ENCODE measurements at regions of chr2 and their contacts with region 1.

Region 1: DNA sequence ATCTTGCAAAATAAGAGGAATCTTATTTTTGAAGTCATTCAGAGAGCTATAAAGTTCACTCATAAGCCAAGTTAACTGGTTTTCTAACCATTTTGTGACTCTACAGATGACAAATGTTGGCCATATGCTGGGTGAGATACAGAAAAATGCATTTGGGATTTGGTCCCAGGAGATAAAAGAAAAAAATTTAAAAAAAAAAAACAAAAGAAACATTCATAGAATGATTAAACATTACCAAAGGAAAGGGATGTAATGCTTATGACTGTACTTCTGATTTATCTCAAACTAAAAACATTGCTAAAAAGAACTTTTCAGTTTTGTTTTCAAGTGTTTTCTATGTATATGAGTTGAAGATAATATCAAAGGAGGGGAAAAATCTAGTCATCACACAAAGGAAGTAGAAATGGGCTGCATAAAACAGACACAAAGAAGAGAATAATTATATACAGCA is 43.1 kb downstream of the PELI1 start:
- DNase-seq: peak in 3 of 14 experiments; percentile 21 to 63 (median 30)
- ATAC-seq: peak; percentile 49
- H3K4me3 ChIP-seq: no peak overlapping the region
- H3K4me3 Mint-ChIP-seq: peak overlapping the region; percentile 35
- H3K27ac ChIP-seq: peak overlapping the region in 1 of 2 donors; percentile 56
- H3K27ac Mint-ChIP-seq: peak overlapping the region; percentile 69
- H3K4me1 ChIP-seq: peaks cover 9% of the 10 kb centered on the region
- H3K4me1 Mint-ChIP-seq: peaks cover 51% of the 10 kb centered on the region
- H3K27me3 ChIP-seq: no peaks in the 10 kb centered on the region
- H3K27me3 Mint-ChIP-seq: no peaks in the 10 kb centered on the region
- CTCF ChIP-seq: no peak

Region 2: GRCh38 chr2:63643486-63643885 is 457.7 kb before region 1 on chr2:
- CTCF ChIA-PET with region 1: no interaction called
- POLR2A ChIA-PET with region 1: no interaction called
- intact Hi-C with region 1: no loop called
- DNase-seq: no peak
- ATAC-seq: no peak
- H3K4me3 ChIP-seq: no peak overlapping the region
- H3K4me3 Mint-ChIP-seq: no peak overlapping the region
- H3K27ac ChIP-seq: no peak overlapping the region
- H3K27ac Mint-ChIP-seq: no peak overlapping the region
- H3K4me1 ChIP-seq: no peaks in the 10 kb centered on the region
- H3K4me1 Mint-ChIP-seq: no peaks in the 10 kb centered on the region
- H3K27me3 ChIP-seq: no peaks in the 10 kb centered on the region
- H3K27me3 Mint-ChIP-seq: peaks cover 21% of the 10 kb centered on the region
- CTCF ChIP-seq: no peak

Region 3: DNA sequence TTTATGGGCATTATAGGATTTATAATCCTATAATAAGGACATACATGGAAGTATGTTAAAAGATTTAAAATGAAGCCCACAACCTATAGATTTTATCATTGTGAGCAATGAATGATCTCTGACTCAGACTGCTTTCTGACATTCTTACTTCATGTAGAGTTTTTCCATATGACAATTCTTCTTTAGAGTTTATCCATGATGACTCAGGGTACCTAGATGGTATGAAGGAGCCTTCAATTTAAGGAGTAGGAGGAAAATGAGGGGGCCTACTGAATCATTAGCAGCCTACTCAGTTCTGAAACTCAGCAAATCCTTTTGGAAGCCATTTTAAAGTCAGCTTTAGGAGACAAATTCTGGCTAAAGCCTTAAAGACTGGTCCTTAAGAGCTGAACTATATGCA is 32.7 kb after region 1 on chr2:
- CTCF ChIA-PET with region 1: interaction called, 3 read pairs
- POLR2A ChIA-PET with region 1: interaction called, 4 read pairs
- intact Hi-C with region 1: loop called in 1 of 2 experiments (anchors 5 kb)
- DNase-seq: no peak
- ATAC-seq: no peak
- H3K4me3 ChIP-seq: no peak overlapping the region
- H3K4me3 Mint-ChIP-seq: no peak overlapping the region
- H3K27ac ChIP-seq: no peak overlapping the region
- H3K27ac Mint-ChIP-seq: no peak overlapping the region
- H3K4me1 ChIP-seq: peaks cover 10% of the 10 kb centered on the region
- H3K4me1 Mint-ChIP-seq: peaks cover 80% of the 10 kb centered on the region
- H3K27me3 ChIP-seq: no peaks in the 10 kb centered on the region
- H3K27me3 Mint-ChIP-seq: no peaks in the 10 kb centered on the region
- CTCF ChIP-seq: no peak

Measured in CD4-positive, alpha-beta T cell (primary cell).